ENCODE measurements at regions of chr19 and their contacts with region 1.

Region 1: DNA sequence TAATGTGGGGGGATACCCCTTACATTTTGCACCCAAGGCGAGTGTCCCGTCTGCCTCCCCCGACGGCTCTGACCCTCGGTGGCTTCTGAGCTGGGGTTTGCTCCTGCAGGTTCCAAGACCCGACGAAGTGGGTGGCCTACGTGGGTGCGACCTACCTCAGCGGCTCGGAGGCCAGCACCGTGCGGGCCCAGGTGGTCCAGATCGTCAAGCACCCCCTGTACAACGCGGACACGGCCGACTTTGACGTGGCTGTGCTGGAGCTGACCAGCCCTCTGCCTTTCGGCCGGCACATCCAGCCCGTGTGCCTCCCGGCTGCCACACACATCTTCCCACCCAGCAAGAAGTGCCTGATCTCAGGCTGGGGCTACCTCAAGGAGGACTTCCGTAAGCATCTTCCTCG is 19.1 kb downstream of the TIMM13 start:
- DNase-seq: no peak
- CTCF ChIP-seq: no peak

Region 2: GRCh38 chr19:2391118-2391725 is 17.0 kb before region 1 on chr19:
- CTCF ChIA-PET with region 1: interaction called, 10 read pairs
- POLR2A ChIA-PET with region 1: no interaction called
- DNase-seq: peak; percentile 61
- CTCF ChIP-seq: peak; percentile 74